ENCODE measurements at regions of chr2 and their contacts with region 1.

Region 1: GRCh38 chr2:222038067-222038802 is 260.6 kb downstream of the PAX3 start:
- DNase-seq: peak; percentile 20
- H3K27ac ChIP-seq: no peak overlapping the region
- CTCF ChIP-seq: peak; percentile 44

Region 2: DNA sequence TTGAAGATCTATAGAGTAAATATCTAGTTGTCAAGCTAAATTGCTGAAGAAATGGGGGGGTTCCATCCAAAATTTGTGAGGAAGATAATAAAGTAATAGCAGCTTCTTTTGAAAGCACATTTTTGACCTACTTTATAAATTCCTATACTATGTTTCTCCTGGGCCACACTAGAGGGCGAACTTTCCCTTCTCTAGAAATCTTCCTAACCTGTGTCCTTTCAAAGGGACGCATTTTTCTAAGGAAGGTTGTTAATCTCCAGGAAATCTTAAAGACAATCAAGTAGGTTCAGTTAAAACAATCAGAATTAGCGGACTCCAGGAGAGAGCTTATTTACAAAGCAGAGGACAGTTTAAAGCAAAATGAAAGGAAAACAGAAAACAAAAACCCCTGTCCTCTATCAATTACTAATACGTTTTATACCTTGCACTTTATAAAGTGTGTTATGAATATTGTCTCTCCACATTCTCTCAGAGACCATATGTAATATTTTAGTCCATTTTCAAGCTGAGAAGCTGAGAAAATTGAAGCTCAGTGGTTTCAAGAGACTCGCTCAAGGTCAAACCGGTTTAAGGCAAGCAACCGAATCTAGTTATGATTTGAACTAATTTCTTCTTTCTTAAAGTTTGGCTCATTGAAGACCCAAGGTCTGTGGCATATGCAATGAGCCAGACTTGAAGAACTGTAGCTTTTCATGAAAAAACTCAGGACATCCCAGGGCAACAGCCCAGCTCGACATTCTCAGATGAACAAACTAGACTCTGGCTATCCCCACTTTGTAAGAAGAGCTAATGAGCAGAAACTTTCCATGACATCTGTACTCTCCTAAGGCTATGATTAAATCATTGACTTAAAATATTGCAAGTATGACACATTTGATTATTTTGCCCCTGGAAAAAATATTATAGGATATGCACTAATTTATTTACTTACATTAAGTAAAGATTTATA is 13.0 kb before region 1 on chr2:
- CTCF ChIA-PET with region 1: interaction called, 19 read pairs
- POLR2A ChIA-PET with region 1: no interaction called
- DNase-seq: peak; percentile 36
- H3K27ac ChIP-seq: no peak overlapping the region
- CTCF ChIP-seq: peak; percentile 81